ENCODE measurements at regions of chr4 and their contacts with region 1.

Region 1: GRCh38 chr4:94451695-94452475 is at the start of gene PDLIM5:
- H3K4me3 Mint-ChIP-seq: peak within 1 kb of the TSS; percentile 94
- H3K27ac Mint-ChIP-seq: peak within 1 kb of the TSS; percentile 95
- H3K4me1 Mint-ChIP-seq: peaks cover 27% of the 10 kb centered on the region
- H3K27me3 Mint-ChIP-seq: peaks cover 12% of the 10 kb centered on the region

Region 2: DNA sequence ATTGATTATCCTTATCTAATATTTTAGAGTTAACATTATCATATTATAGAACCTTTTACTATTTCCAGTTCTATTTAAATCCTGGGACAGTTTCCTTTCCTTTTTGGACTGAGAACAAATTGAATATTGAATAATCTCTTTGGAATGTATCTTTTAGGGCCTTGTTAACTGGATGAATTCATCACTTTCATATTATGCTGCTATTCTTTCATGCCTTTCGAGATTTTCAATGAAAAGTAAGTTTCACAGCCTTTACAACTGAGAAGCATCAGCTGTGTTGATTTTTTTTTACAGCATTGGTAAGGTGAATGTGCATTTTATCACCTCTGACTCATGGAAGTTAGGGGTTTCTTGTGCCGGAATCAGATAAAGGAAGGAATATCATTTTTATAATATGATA is 39.4 kb after region 1 on chr4:
- intact Hi-C with region 1: loop called (anchors 5 kb)
- H3K4me3 Mint-ChIP-seq: no peak overlapping the region
- H3K27ac Mint-ChIP-seq: no peak overlapping the region
- H3K4me1 Mint-ChIP-seq: no peaks in the 10 kb centered on the region
- H3K27me3 Mint-ChIP-seq: no peaks in the 10 kb centered on the region

Region 3: DNA sequence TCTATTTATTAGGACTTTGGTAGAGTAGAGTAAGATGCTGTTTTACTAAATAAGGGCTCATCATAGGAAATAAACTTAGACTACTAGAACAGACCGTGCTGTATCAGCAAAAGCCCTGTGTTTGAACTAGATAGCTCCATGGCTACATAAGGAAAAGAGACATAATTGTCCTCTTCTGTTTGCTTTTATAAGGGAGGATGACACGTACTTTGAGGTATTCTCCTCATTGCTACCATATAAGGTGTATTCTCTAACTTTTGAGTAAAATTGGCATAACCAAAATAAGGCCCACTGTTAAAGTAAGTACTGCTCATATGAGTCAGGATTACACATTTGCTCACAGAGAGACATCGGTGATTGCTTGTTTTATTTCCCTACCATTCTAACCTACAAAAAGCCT is 64.2 kb after region 1 on chr4:
- intact Hi-C with region 1: loop called (anchors 5 kb)
- H3K4me3 Mint-ChIP-seq: no peak overlapping the region
- H3K27ac Mint-ChIP-seq: no peak overlapping the region
- H3K4me1 Mint-ChIP-seq: peaks cover 32% of the 10 kb centered on the region
- H3K27me3 Mint-ChIP-seq: no peaks in the 10 kb centered on the region

Region 4: GRCh38 chr4:94577136-94577535 is 125.3 kb after region 1 on chr4:
- intact Hi-C with region 1: no loop called
- H3K4me3 Mint-ChIP-seq: no peak overlapping the region
- H3K27ac Mint-ChIP-seq: no peak overlapping the region
- H3K4me1 Mint-ChIP-seq: peaks cover 5% of the 10 kb centered on the region
- H3K27me3 Mint-ChIP-seq: no peaks in the 10 kb centered on the region

Region 5: DNA sequence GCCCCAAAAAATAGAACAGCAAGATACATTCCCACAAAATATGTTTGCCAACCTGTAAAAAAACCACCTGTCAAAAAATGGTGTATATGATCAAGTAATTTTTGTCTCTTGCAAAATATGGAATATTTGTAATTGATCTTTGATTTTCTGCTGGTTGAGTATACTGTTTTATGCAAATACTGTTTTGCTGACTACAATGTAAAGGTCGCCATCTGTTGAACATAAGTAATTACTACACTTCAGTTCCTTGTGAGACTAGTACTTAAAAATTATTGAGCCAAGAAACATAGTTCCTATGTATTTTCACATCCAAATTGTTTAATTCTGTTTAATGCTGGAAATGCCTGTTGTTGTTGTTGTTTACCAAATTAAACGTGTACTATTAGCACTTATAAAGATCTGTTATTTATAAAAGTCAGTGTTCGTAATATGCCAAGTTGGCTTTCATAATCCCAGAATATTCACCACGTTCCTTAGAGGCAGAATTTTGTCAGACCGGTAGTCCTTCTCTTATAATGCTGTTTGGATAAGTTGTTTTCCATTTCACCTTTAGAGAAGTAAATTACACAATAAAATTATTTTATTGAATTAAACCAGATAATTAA is 144.1 kb after region 1 on chr4:
- intact Hi-C with region 1: loop called (anchors 5 kb)
- H3K4me3 Mint-ChIP-seq: no peak overlapping the region
- H3K27ac Mint-ChIP-seq: no peak overlapping the region
- H3K4me1 Mint-ChIP-seq: no peaks in the 10 kb centered on the region
- H3K27me3 Mint-ChIP-seq: no peaks in the 10 kb centered on the region

Measured in dendritic cell treated with granulocyte-macrophage colony-stimulating factor and Interleukin-4, amounts not matched to agents 40 ng/mL and 50 ng/mL, for 4 days (primary cell).